ENCODE measurements at regions of chr4 and their contacts with region 1.

Region 1: GRCh38 chr4:169619959-169620879 is at the start of gene CLCN3:
- DNase-seq: peak; percentile 98
- H3K4me3 Mint-ChIP-seq: peak within 1 kb of the TSS; percentile 97
- H3K27ac Mint-ChIP-seq: peak within 1 kb of the TSS; percentile 98
- H3K4me1 Mint-ChIP-seq: peaks cover 29% of the 10 kb centered on the region
- H3K27me3 Mint-ChIP-seq: no peaks in the 10 kb centered on the region
- CTCF ChIP-seq: no peak
- total RNA-seq, gene CLCN3: 56.0 and 67.8 TPM in 2 replicates

Region 2: GRCh38 chr4:169604131-169604900 is 15.9 kb before region 1 on chr4:
- CTCF ChIA-PET with region 1: interaction called, 9 read pairs
- POLR2A ChIA-PET with region 1: interaction called, 12 read pairs
- intact Hi-C with region 1: no loop called
- DNase-seq: peak; percentile 61
- H3K4me3 Mint-ChIP-seq: no peak overlapping the region
- H3K27ac Mint-ChIP-seq: peak overlapping the region; percentile 86
- H3K4me1 Mint-ChIP-seq: peaks cover 8% of the 10 kb centered on the region
- H3K27me3 Mint-ChIP-seq: no peaks in the 10 kb centered on the region
- CTCF ChIP-seq: no peak

Region 3: DNA sequence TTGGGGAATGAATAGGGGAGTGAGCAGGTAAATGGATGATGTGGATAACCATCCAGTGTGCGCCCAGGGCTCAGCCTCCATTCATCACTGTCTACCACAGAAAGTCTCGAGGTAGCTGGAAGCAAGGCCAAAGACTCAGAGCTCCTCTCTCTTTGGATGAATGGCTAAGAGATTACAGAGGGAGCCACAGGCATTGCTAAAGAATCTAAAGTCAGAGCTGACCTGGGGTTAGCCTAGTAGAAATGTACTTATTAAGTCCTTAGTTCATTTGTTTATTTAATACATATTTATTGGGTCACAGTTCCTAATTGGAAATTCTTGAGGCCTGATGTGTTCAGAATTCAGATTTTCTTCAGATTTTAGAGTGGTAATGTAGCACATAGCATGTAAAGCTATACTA is 226.2 kb after region 1 on chr4:
- CTCF ChIA-PET with region 1: no interaction called
- POLR2A ChIA-PET with region 1: no interaction called
- intact Hi-C with region 1: no loop called
- DNase-seq: no peak
- H3K4me3 Mint-ChIP-seq: no peak overlapping the region
- H3K27ac Mint-ChIP-seq: no peak overlapping the region
- H3K4me1 Mint-ChIP-seq: peaks cover 5% of the 10 kb centered on the region
- H3K27me3 Mint-ChIP-seq: peaks cover 10% of the 10 kb centered on the region
- CTCF ChIP-seq: no peak

Region 4: DNA sequence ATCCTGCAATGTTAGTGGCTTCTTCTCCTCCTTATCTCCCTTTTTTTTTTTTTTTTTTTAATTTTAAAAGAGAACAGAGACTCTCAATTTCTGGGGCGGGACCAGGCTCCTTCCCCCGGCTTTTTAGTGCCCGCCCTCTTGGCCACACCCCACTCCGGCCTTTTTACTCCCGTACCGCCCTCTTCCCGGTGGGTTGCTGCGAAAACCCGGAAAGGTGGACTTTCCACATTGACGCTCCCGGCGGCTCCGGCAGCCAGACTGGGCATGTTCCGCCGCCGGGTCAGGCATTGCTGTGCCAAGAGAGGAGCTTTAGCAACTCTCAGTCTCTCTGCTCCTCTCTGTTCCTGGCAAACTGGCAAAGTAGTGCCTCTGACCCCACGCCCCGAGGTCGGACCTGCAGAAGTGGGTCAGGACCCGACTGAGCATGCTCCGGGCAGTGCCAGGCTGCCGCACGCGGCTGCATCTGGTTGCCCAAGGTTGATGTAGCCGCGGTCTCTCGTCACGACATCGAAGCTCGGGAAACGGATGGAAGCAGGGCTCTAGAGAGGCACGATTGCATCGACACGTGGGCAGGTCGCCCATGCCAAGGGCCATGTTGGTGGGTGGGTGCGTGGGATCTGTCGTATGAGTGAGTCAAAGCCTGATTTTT is 407.1 kb after region 1 on chr4:
- CTCF ChIA-PET with region 1: no interaction called
- POLR2A ChIA-PET with region 1: interaction called, 6 read pairs
- intact Hi-C with region 1: loop called (anchors 1 kb)
- DNase-seq: peak; percentile 96
- H3K4me3 Mint-ChIP-seq: peak overlapping the region; percentile 93
- H3K27ac Mint-ChIP-seq: peak overlapping the region; percentile 96
- H3K4me1 Mint-ChIP-seq: peaks cover 12% of the 10 kb centered on the region
- H3K27me3 Mint-ChIP-seq: no peaks in the 10 kb centered on the region
- CTCF ChIP-seq: no peak

Measured in MCF 10A (cell line).